CD14-positive monocyte (primary cell): ENCODE measurements at regions of chr4 and their contacts with region 1.

Region 1: GRCh38 chr4:150867148-150867547 is 147.9 kb downstream of the LRBA start:
- DNase-seq: peak; percentile 44 to 65 (median 58)
- H3K4me3 ChIP-seq: no peak overlapping the region
- H3K4me3 Mint-ChIP-seq: no peak overlapping the region
- H3K27ac ChIP-seq: no peak overlapping the region
- H3K27ac Mint-ChIP-seq: no peak overlapping the region
- H3K4me1 ChIP-seq: no peaks in the 10 kb centered on the region
- H3K4me1 Mint-ChIP-seq: no peaks in the 10 kb centered on the region
- H3K27me3 ChIP-seq: no peaks in the 10 kb centered on the region
- H3K27me3 Mint-ChIP-seq: no peaks in the 10 kb centered on the region
- CTCF ChIP-seq: peak; percentile 76

Region 2: GRCh38 chr4:150297861-150298474 is 569.2 kb before region 1 on chr4:
- intact Hi-C with region 1: loop called in 1 of 2 experiments (anchors 10 kb)
- DNase-seq: peak in 1 of 3 donors; percentile 7
- H3K4me3 ChIP-seq: no peak overlapping the region
- H3K4me3 Mint-ChIP-seq: no peak overlapping the region
- H3K27ac ChIP-seq: no peak overlapping the region
- H3K27ac Mint-ChIP-seq: no peak overlapping the region
- H3K4me1 ChIP-seq: peaks cover 4 to 5% of the 10 kb centered on the region in 2 donors
- H3K4me1 Mint-ChIP-seq: peaks cover 3% of the 10 kb centered on the region
- H3K27me3 ChIP-seq: no peaks in the 10 kb centered on the region
- H3K27me3 Mint-ChIP-seq: no peaks in the 10 kb centered on the region
- CTCF ChIP-seq: peak; percentile 60

Region 3: GRCh38 chr4:150799207-150799606 is 67.9 kb before region 1 on chr4:
- intact Hi-C with region 1: no loop called
- DNase-seq: no peak
- H3K4me3 ChIP-seq: no peak overlapping the region
- H3K4me3 Mint-ChIP-seq: no peak overlapping the region
- H3K27ac ChIP-seq: no peak overlapping the region
- H3K27ac Mint-ChIP-seq: no peak overlapping the region
- H3K4me1 ChIP-seq: no peaks in the 10 kb centered on the region
- H3K4me1 Mint-ChIP-seq: no peaks in the 10 kb centered on the region
- H3K27me3 ChIP-seq: no peaks in the 10 kb centered on the region
- H3K27me3 Mint-ChIP-seq: no peaks in the 10 kb centered on the region
- CTCF ChIP-seq: no peak